Dendritic cell treated with granulocyte-macrophage colony-stimulating factor and Interleukin-4, amounts not matched to agents 40 ng/mL and 50 ng/mL, for 4 days (primary cell): ENCODE measurements at regions of chr17 and their contacts with region 1.

Region 1: DNA sequence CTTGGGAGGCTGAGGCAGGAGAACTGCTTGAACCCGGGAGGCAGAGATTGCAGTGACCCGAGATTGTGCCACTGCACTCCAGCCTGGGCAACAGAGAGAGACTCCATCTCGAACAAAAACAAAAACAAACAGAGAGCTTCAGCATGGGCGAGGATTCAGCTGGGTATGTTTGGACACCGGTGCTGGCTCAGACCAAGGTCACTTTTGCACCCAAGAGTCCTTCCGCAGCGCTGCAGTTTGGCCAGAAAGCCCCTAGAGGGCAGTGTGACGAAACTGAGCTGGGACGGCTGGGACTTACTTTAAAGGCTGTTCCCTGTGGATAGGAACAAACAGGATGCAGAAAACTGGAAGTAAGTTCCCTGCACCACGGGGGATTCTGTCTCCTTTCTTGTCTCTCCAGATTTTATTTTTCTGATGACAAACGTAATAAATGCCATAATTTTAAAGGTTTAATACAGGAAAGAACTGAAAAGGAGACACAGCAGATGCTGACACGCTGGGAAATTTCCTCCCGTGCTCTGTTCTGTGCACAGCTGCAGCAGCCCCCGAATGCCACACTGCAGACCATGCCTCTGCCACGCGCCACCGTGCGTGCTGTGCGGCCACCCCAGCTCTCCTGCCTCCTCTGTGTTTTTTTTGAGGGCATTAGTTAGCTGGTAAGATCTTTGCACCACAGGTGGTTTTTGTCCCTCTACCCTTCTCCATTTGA is 25.2 kb upstream of the USP36 start:
- H3K4me3 Mint-ChIP-seq: peak overlapping the region; percentile 45
- H3K27ac Mint-ChIP-seq: no peak overlapping the region
- H3K4me1 Mint-ChIP-seq: peaks cover 72% of the 10 kb centered on the region
- H3K27me3 Mint-ChIP-seq: no peaks in the 10 kb centered on the region

Region 2: DNA sequence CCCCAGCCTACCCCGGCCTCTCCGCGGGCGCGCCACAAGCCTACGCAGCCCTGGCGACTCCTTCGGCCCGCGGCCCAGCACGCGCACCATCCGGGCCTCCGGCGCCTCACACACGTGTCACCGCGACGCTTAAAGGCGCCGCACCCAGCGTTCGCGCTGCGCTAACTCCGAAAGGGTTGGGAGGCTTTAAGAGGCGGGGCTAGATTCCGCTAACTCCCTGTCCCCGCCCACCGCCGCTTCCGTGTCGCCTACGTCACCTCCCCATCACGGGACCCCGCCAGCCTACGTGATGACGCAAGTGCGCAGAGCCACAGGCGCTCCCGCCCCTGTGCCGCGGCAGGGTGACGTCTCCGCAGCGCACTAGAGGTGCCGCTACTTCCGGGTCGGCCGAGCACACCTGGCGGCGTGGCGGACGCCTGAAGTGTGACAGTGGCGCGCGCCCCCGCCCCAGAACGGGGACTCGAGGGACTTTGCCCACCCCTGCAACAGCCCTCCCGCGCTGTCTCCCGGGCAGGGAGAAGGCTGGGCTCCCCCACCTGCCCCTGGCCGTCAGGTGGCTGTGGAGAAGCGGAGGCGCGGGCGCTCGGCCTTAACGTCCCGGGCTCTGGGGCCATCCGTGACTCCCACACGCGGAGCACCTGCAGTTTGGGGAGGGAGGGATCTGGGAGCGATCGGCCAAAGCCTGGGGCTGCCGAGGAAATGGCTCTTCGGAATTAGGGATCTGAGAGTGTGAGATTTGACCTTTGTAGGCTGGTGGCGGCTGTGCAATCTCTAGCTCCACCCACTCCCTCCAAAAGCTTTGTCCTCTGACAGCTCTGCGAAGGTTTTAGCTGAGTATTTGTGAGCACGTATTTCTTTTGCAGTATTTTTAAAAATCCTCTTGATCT is 24.9 kb before region 1 on chr17 and contains the start of gene USP36:
- intact Hi-C with region 1: loop called (anchors 2 kb)
- H3K4me3 Mint-ChIP-seq: peak within 1 kb of the TSS; percentile 79
- H3K27ac Mint-ChIP-seq: peak within 1 kb of the TSS; percentile 96
- H3K4me1 Mint-ChIP-seq: peaks cover 45% of the 10 kb centered on the region
- H3K27me3 Mint-ChIP-seq: peaks cover 6% of the 10 kb centered on the region

Region 3: DNA sequence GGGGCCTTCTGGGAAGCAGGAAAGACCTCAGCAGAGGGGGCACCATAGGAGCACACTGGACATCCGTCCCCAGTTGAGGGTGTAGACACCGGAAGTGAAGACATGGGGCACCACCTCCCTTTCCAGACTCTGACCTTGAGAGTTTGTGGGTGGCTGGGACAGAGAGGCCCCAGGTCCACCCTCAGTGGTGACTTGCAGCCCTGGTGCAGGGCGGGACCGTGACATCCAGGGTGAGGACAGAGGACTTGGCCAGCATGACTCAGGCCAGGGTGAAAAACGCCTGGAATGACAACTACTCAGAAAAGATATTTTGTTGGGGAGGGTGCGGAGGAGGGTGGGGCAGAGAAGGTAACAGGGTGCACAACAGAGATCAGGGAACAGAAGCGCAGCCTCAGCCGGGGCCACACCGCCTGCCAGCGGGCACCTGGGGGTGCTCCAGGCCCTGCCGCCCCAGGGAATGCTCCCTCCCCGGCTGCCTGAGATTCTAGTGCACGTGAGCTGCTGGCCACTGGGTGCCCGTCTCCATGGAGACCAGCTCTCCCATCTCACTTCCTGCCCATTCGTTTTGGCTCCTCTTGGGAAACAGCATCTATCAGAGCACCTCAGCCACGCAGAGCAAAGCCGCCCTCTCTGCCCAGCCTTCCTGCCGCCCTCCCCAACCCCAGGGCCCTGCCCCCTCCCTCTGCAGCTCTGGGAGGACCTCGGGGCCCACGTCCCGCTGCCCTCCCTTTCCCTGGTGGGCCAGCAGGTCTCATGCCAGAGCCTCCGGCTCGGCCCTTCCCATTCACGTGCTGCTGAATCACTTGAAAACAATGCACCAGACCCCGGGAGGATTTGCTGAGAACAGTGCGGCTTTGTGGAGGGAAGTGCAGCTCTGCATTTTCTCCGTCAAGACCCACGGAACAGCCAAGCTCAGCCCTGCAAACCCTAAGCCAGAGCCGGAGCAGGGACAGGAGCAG is 17.6 kb after region 1 on chr17:
- intact Hi-C with region 1: loop called (anchors 2 kb)
- H3K4me3 Mint-ChIP-seq: peak overlapping the region; percentile 69
- H3K27ac Mint-ChIP-seq: peak overlapping the region; percentile 97
- H3K4me1 Mint-ChIP-seq: peaks cover 93% of the 10 kb centered on the region
- H3K27me3 Mint-ChIP-seq: no peaks in the 10 kb centered on the region

Region 4: GRCh38 chr17:78925234-78925633 is 59.4 kb after region 1 on chr17 and contains the start of gene TIMP2:
- intact Hi-C with region 1: loop called (anchors 1 kb)
- H3K4me3 Mint-ChIP-seq: peak within 1 kb of the TSS; percentile 89
- H3K27ac Mint-ChIP-seq: peak within 1 kb of the TSS; percentile 87
- H3K4me1 Mint-ChIP-seq: peaks cover 43% of the 10 kb centered on the region
- H3K27me3 Mint-ChIP-seq: peaks cover 7% of the 10 kb centered on the region

Region 5: DNA sequence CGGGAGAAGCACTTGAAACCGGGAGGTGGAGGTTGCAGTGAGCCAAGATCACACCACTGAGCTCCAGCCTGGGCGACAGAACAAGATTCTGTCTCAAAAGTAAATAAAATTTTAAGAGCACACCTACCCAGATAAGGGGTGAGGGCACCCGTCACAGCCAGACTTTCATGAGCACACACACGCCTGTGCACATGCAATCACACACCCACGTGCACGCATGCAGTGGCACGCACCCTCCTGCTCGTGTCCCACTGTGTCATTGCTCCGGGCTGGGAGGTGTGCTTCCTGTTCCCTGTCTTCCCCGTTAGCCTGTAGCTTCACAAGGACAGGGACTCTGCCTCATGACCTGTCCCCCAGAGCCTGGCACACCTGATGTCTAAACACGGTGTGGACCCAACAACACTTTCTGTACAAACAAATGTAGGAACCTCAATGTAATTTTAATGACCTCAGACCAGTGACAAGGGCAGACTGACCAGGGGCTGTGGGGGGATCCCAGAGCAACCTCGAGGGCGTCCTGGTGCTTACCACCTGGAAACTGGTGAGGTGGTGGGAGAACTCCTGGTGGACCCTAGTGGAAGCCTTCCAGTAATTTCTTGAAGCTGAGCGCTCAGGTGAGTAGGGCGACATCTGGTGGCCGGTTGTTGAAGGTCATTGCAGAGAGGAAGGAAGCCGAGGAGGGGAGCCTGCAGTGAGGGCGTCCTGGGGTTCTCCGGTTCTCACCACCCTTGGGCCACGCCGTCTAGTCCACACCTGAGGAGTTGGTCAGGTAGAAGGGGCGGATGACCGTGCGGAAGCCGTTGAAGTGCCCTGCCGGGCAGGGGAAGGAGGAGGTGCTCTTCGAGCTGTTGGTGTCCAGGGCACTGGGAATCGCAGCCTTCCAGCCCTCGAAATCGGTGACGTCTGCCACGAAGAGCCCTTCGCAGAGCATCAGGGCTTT is 105.3 kb after region 1 on chr17:
- intact Hi-C with region 1: loop called (anchors 2 kb)
- H3K4me3 Mint-ChIP-seq: no peak overlapping the region
- H3K27ac Mint-ChIP-seq: peak overlapping the region; percentile 23
- H3K4me1 Mint-ChIP-seq: peaks cover 13% of the 10 kb centered on the region
- H3K27me3 Mint-ChIP-seq: peaks cover 8% of the 10 kb centered on the region